B cell (primary cell): ENCODE measurements at regions of chr5 and their contacts with region 1.

Region 1: DNA sequence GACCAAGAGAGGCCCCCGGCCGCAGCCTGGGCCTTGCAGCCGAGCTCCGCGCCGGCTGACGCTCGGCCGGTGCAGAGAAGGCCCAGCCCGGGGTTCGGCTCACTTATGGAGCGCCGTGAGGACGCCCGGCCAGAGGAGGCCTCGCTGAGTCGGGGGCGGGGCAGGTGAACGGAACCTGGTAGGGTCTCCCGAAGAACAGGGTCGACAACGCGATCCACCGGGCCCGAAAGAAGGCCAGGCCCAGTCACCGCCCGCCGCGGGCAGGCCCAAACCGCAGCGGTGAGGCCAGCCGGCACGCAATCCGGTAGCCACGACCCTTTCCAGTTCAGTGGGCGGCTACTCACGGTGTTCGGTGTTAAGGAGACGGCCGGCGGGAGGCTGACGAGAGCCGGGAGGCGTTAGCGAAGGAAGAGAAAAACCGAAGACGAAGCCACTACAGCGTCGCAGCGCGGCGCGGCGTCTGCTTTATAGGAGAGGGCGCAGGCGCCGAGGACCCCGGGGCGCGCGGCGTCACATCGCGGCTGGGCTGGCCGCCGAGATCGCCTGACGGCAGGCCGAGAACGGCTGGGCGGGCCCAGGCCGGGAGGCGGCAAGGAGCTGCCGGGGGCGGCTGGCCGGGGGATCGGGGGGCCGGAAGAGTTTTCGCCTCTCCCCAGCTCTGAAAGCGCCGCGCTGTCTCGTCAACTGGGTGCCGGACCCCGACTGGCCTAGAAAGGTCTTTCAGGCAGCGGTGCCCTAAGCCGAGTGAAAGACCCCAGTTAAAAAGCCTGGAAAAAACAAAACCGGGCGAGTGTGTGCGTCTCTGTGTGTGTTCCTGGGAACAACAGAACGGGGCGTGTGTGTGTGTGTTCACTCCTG is at the start of gene SKP1:
- DNase-seq: peak; percentile 95
- ATAC-seq: peak; percentile 86
- H3K4me3 ChIP-seq: peak within 1 kb of the TSS; percentile 73 to 100 (median 93)
- H3K4me3 Mint-ChIP-seq: peak within 1 kb of the TSS; percentile 96
- H3K27ac ChIP-seq: peak within 1 kb of the TSS; percentile 98 to 100
- H3K27ac Mint-ChIP-seq: peak within 1 kb of the TSS; percentile 98
- H3K4me1 ChIP-seq: peaks cover 25 to 27% of the 10 kb centered on the region in 2 donors
- H3K4me1 Mint-ChIP-seq: peaks cover 29% of the 10 kb centered on the region
- H3K27me3 ChIP-seq: no peaks in the 10 kb centered on the region
- H3K27me3 Mint-ChIP-seq: no peaks in the 10 kb centered on the region
- CTCF ChIP-seq: no peak
- total RNA-seq, gene SKP1: 182 and 186 TPM in 2 replicates

Region 2: GRCh38 chr5:134206627-134207160 is 30.0 kb after region 1 on chr5:
- CTCF ChIA-PET with region 1: no interaction called
- POLR2A ChIA-PET with region 1: no interaction called
- intact Hi-C with region 1: no loop called
- DNase-seq: no peak
- ATAC-seq: no peak
- H3K4me3 ChIP-seq: no peak overlapping the region
- H3K4me3 Mint-ChIP-seq: no peak overlapping the region
- H3K27ac ChIP-seq: no peak overlapping the region
- H3K27ac Mint-ChIP-seq: no peak overlapping the region
- H3K4me1 ChIP-seq: peaks cover 7 to 8% of the 10 kb centered on the region in 2 donors
- H3K4me1 Mint-ChIP-seq: peaks cover 43% of the 10 kb centered on the region
- H3K27me3 ChIP-seq: no peaks in the 10 kb centered on the region
- H3K27me3 Mint-ChIP-seq: no peaks in the 10 kb centered on the region
- CTCF ChIP-seq: no peak

Region 3: DNA sequence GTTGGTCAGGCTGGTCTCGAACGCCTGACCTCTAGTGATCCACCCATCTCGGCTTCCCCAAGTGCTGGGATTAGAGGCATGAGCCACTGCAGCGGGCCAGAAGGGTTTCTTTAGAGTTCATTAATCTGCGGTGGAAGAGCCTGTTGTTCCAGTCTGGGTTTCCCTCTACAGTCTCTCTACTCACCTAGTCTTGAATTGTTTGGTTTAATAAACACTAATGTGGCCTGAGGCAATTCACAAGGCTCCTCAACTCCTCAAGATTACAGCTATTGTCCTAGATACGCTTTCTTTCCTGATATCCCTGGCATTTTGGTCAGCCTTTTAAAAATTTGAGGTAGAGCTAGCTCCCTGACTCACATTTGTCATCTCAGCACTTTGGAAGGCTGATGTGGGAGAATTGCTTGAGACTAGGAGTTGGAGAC is 460.4 kb after region 1 on chr5:
- CTCF ChIA-PET with region 1: no interaction called
- POLR2A ChIA-PET with region 1: no interaction called
- intact Hi-C with region 1: loop called (anchors 5 kb)
- DNase-seq: no peak
- ATAC-seq: no peak
- H3K4me3 ChIP-seq: no peak overlapping the region
- H3K4me3 Mint-ChIP-seq: no peak overlapping the region
- H3K27ac ChIP-seq: no peak overlapping the region
- H3K27ac Mint-ChIP-seq: no peak overlapping the region
- H3K4me1 ChIP-seq: peaks cover under 1 to 4% of the 10 kb centered on the region in 2 donors
- H3K4me1 Mint-ChIP-seq: peaks cover 6% of the 10 kb centered on the region
- H3K27me3 ChIP-seq: no peaks in the 10 kb centered on the region
- H3K27me3 Mint-ChIP-seq: no peaks in the 10 kb centered on the region
- CTCF ChIP-seq: no peak